ENCODE measurements at regions of chr19 and their contacts with region 1.

Region 1: DNA sequence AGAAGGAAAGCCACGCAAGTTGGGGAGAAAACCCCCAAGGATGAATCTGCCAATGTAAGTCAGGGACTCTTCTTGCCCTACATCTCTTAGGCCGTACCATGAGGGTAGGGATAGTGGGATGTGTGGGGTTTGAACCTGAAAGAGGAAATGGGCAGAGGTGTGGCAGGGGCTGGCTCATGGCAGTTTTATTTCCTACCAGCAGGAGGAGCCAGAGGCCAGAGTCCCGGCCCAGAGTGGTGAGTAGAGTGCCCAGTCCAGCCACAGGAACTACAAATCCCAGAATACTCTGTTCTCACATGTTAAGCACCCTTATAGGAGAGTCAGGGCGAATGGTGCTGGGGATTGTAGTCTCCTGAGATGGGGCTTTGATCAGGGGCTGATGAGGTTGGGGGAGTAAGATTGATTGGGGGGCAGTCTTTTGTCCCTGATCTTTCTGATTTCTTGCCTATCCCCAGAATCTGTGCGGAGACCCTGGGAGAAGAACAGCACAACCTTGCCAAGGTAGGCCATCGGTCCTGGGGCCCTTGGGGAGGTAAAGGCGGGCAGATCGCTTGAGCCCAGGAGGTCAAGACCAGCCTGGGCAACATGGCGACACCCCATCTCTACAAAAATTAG is 16.5 kb downstream of the VASP start:
- DNase-seq: peak; percentile 82
- ATAC-seq: peak; percentile 92
- H3K4me3 ChIP-seq: no peak overlapping the region
- H3K27ac ChIP-seq: no peak overlapping the region
- H3K4me1 ChIP-seq: peaks cover under 1% of the 10 kb centered on the region; the same call in 1 of the 2 replicates
- H3K27me3 ChIP-seq: no peaks in the 10 kb centered on the region
- CTCF ChIP-seq: peak; percentile 92
- EP300 ChIP-seq: no peak
- POLR2A ChIP-seq: no peak
- RAD21 ChIP-seq: peak; percentile 88

Region 2: DNA sequence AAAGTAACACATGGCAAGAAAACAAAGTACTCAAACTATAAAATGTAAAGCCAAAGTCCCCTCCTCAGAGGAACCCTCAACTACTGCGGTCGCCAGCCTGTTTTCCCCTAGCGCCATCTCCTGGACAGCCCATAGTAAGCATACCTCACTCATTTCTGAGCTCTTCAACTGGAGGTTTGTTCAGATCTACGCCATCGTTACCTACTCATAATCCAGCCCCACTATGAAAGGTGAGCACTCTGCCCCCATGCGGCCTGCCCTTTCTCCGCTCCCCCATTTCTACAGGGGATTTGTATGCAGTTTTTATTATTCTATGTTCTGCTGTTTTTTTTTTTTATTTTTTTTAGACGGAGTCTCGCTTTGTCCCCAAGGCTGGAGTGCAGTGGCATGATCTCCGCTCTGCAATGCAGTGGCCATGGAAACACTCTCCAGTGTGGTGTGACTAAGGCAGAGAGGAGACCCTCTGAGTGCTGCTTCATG is 34.7 kb after region 1 on chr19:
- CTCF ChIA-PET with region 1: interaction called, 10 read pairs
- POLR2A ChIA-PET with region 1: no interaction called
- in situ Hi-C with region 1: loop called (anchors 5 kb)
- intact Hi-C with region 1: loop called (anchors 5 kb)
- DNase-seq: peak; percentile 73
- ATAC-seq: peak; percentile 90
- H3K4me3 ChIP-seq: no peak overlapping the region
- H3K27ac ChIP-seq: no peak overlapping the region
- H3K4me1 ChIP-seq: peaks cover 8% of the 10 kb centered on the region
- H3K27me3 ChIP-seq: no peaks in the 10 kb centered on the region
- CTCF ChIP-seq: peak; percentile 80
- EP300 ChIP-seq: no peak
- POLR2A ChIP-seq: no peak
- RAD21 ChIP-seq: peak; percentile 81

Region 3: GRCh38 chr19:45569619-45570421 is 46.1 kb after region 1 on chr19:
- CTCF ChIA-PET with region 1: interaction called, 10 read pairs
- POLR2A ChIA-PET with region 1: no interaction called
- in situ Hi-C with region 1: no loop called
- intact Hi-C with region 1: loop called (anchors 1 kb)
- DNase-seq: peak; percentile 45
- ATAC-seq: peak; percentile 89
- H3K4me3 ChIP-seq: no peak overlapping the region
- H3K27ac ChIP-seq: no peak overlapping the region
- H3K4me1 ChIP-seq: peaks cover 25% of the 10 kb centered on the region
- H3K27me3 ChIP-seq: no peaks in the 10 kb centered on the region
- CTCF ChIP-seq: peak; percentile 90
- EP300 ChIP-seq: no peak
- POLR2A ChIP-seq: no peak
- RAD21 ChIP-seq: peak; percentile 69; the same call in 1 of the 2 replicates

Measured in HepG2 (cell line).